ENCODE measurements at regions of chr1 and their contacts with region 1.

Region 1: GRCh38 chr1:239814303-239814881 is 277.3 kb upstream of the FMN2 start:
- DNase-seq: no peak
- H3K4me3 Mint-ChIP-seq: no peak overlapping the region
- H3K27ac Mint-ChIP-seq: peak overlapping the region; percentile 3
- H3K4me1 Mint-ChIP-seq: peaks cover 27% of the 10 kb centered on the region
- H3K27me3 Mint-ChIP-seq: peaks cover 2% of the 10 kb centered on the region

Region 2: DNA sequence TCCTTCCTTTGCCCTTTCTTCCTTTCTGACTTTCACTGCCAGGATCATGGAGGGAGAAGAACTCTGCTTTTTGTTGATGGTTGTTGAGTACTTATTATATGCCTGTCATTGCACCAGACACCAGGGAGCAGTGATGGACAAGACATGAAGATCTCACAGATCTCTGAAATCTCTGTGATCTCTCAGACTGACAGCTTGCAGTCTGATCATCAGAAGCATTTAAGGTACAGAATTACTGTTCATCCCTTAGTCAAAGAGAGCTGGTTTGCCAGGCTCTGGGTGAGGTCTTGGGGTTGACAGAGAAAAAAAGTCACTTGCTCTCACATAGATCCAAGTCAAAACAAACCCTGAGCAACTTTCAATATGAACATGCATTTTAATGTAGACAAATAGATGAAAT is 22.2 kb before region 1 on chr1:
- intact Hi-C with region 1: loop called (anchors 2 kb)
- DNase-seq: no peak
- H3K4me3 Mint-ChIP-seq: no peak overlapping the region
- H3K27ac Mint-ChIP-seq: no peak overlapping the region
- H3K4me1 Mint-ChIP-seq: peaks cover 6% of the 10 kb centered on the region
- H3K27me3 Mint-ChIP-seq: peaks cover 12% of the 10 kb centered on the region

Region 3: DNA sequence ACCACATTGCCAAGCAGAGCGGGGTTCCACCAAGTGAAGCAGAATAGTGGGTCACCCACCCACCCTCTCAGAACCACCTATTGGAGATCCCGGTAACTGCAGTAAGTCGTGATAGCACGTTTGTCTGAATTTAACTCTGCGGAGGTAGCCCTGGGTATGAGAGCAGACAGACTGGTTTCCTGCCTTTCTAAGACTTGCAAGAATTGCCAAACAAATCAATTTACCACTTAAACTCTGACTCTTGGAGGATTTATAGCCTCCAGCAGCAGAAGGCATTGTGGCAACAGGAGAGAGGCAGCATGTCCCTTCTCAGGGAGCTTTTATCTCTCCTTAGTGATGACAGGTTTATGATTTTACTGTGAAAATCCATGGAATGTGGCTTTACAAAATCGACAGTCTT is 10.6 kb before region 1 on chr1:
- intact Hi-C with region 1: no loop called
- DNase-seq: no peak
- H3K4me3 Mint-ChIP-seq: no peak overlapping the region
- H3K27ac Mint-ChIP-seq: no peak overlapping the region
- H3K4me1 Mint-ChIP-seq: no peaks in the 10 kb centered on the region
- H3K27me3 Mint-ChIP-seq: peaks cover 6% of the 10 kb centered on the region

Measured in activated T-helper 2 cell treated with anti-CD3 and anti-CD28 coated beads, Interferon-gamma antibody, Interleukin-2, Interleukin-4, amounts not matched to agents 10 μg/mL and 5 μg/mL and 100 μg/mL, durations not matched to agents 14 hours and 24 hours and 36 hours (primary cell).